Posterior vena cava (tissue), 2 donors: ENCODE measurements at regions of chr3 and their contacts with region 1.

Region 1: DNA sequence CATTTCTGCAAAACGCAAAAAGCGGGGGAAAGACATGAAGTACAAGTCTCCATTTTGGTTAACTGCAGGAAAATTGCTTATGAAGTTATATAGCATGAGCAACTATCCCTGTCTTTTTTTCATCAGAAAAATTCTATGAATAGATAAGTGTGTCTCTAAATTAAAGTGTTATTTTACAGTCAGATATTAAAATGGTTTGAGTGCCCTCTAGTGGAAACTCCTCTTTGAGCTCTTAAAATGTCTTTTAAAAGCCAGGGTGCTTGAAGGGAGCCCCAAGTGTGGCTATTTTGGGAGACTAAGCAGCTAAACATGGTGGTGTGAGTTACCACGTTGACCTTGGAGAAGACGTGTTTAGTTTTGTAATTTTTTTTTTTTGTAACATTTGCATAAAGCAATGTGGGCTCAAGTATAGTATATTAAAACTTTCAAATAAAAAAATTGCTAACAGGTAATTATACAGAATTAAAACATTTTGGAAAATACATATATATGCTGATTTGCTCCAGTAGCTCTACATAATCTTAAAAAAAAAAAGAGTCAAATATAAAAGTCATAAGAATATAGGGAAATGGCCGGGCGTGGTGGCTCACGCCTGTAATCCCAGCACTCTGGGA is 77.2 kb downstream of the PPP2R3A start:
- DNase-seq: no peak

Region 2: DNA sequence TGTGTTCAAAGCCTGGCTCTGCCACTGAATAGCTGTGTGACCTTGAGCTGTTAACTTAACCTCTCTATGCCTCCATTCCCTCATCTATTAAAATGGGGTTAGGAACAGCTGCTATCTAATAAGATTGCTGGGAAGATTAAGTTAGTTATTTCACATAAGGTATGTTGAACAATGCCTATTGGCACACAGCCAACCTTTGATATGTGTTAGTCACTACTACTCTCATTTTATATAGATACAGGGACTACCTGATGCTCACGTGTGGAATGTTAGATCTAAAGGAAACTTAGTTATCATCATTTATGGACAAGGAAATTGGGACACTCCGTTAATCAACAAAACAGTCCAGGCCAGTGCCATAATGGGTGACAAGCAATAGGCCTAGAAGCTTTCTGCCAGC is 409.6 kb before region 1 on chr3:
- intact Hi-C with region 1: no loop called
- DNase-seq: no peak

Region 3: DNA sequence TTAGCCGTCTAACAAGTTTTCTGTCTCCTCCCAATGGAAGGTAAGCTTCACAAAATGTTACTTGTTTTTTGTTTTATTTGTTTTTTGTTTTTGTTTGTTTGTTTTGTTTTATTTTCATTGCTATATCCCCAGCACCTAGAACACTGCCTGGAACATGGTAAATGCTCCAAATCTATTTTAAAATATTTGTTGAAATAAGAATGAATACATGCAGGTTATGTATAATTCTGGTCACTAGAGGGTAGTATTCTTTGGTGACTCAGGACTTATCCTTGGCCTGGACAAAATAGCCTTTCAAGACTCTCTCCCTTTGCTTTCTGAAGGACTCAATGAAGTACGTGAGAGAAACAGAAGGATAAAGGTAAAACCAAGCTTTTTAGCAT is 124.1 kb before region 1 on chr3:
- intact Hi-C with region 1: loop called (anchors 5 kb)
- DNase-seq: no peak

Region 4: GRCh38 chr3:136075218-136075808 is 32.6 kb after region 1 on chr3:
- intact Hi-C with region 1: no loop called
- DNase-seq: no peak

Region 5: GRCh38 chr3:136974670-136975069 is 932.0 kb after region 1 on chr3:
- intact Hi-C with region 1: no loop called
- DNase-seq: no peak